ENCODE measurements at regions of chr14 and their contacts with region 1.

Region 1: DNA sequence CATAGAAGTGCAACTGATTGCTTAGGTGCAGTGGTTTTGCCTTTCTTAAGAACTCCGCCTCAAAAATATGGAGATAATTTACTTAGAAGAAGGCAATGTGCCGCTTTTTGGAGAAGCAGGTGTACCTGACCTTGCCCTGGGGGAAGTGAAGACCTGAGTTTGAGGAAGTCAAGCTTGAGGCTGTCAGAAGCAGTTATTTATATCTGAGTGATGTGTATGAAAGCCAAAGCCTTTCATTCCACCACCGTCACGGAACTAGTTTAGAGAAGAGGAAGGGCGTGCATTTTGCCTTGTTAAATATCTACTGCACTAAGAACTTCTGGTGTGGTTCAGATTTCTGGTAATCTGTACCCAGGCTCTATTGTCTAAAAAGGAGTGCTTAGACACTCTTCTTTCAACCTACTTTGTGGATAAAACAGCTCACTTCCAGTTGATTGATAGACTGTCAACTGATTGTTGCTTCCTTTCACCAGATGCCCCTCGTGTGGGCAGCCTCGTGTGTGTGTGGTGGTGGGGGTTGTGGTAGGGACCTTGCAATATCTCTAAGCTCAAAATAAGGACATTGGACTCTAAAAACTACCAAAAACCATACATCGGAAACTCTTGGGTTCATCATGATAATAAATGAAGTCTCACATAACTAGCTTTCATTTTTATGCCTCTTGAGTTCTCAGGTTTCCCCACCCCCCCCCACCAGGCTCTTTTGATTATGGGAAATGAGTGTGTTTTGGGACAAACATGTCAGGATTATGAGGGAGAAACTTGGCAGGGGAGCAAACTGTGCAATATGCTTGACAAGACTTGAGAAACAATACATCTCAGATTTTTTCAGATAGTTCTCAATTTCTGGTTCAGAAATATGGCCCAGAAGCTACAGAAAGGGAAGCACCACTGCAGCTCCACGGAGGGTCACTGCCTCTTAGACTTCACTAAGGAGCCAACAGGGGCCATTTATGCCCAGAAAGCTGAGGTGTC is 78.6 kb downstream of the ARF6 start:
- DNase-seq: peak; percentile 63
- H3K4me3 Mint-ChIP-seq: peak overlapping the region; percentile 72
- H3K27ac Mint-ChIP-seq: peak overlapping the region; percentile 98
- H3K4me1 Mint-ChIP-seq: peaks cover 57% of the 10 kb centered on the region
- H3K27me3 Mint-ChIP-seq: no peaks in the 10 kb centered on the region

Region 2: GRCh38 chr14:49620182-49621113 is 351.0 kb before region 1 on chr14 and contains the starts of genes MGAT2 and RPL36AL:
- CTCF ChIA-PET with region 1: no interaction called
- POLR2A ChIA-PET with region 1: interaction called, 16 read pairs
- DNase-seq: peak; percentile 96
- H3K4me3 Mint-ChIP-seq: peak within 1 kb of the TSS; percentile 94
- H3K27ac Mint-ChIP-seq: peak within 1 kb of the TSS; percentile 94
- H3K4me1 Mint-ChIP-seq: peaks cover 50% of the 10 kb centered on the region
- H3K27me3 Mint-ChIP-seq: no peaks in the 10 kb centered on the region
- total RNA-seq, gene MGAT2: 82.7 to 86.5 TPM
- total RNA-seq, gene RPL36AL: 320 to 330 TPM

Region 3: DNA sequence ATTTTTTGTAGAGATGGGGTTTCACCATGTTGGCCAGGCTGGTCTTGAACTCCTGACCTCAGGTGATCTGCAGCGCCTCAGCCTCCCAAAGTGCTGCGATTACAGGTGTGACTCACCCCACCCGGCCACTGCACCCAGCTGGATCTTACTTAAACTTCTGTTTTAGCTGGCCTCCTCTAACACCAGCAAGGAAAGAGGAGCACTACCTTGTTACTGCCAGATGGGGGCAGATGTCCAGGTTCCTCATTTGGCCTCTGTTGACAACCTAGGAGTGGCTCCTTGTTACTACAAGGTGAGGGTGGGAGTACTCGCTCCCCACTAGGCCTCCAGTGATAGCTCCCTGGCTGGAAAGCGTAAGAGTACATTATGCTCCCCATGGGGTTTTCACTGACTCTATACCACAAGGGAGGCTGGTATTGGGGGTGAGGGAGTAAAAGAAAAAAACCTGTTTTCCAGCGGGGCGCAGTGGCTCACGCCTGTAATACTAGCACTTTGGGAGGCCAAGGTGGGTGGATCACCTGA is 91.7 kb before region 1 on chr14:
- CTCF ChIA-PET with region 1: interaction called, 9 read pairs
- POLR2A ChIA-PET with region 1: interaction called, 19 read pairs
- DNase-seq: peak; percentile 76
- H3K4me3 Mint-ChIP-seq: no peak overlapping the region
- H3K27ac Mint-ChIP-seq: peak overlapping the region; percentile 50
- H3K4me1 Mint-ChIP-seq: peaks cover 48% of the 10 kb centered on the region
- H3K27me3 Mint-ChIP-seq: no peaks in the 10 kb centered on the region

Region 4: DNA sequence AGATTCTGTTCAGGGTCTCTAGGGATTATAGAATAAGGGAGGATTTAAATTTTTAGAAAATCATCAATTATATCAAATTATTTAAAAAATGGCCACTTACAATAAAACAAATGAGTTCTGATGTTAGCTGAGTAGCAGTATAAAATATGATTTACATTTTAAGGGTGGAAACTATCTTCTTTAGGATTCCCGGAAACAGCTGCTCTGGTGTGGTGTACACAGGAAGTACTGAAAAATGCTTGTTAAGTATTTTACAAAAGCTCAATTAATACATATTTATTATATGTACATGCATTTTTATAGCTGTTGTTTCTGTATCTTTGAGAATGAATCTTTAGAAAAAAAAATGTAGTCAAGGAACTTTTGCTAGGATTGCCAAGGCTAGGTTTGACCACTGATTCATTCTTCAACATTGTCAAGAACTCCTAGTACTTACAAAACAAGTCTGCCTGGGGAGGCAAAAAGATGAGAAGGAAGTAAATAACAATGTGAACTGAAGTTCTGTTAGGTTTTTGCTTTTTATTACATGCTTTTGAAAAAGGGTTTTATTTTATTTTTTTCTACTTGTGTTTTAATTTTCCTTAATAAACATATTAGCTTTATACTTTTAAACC is 30.5 kb before region 1 on chr14:
- CTCF ChIA-PET with region 1: interaction called, 37 read pairs
- POLR2A ChIA-PET with region 1: interaction called, 130 read pairs
- DNase-seq: peak; percentile 30
- H3K4me3 Mint-ChIP-seq: no peak overlapping the region
- H3K27ac Mint-ChIP-seq: peak overlapping the region; percentile 63
- H3K4me1 Mint-ChIP-seq: peaks cover 68% of the 10 kb centered on the region
- H3K27me3 Mint-ChIP-seq: no peaks in the 10 kb centered on the region

Region 5: GRCh38 chr14:50038398-50039119 is 67.1 kb after region 1 on chr14:
- CTCF ChIA-PET with region 1: interaction called, 4 read pairs
- POLR2A ChIA-PET with region 1: interaction called, 32 read pairs
- DNase-seq: peak; percentile 70
- H3K4me3 Mint-ChIP-seq: peak overlapping the region; percentile 79
- H3K27ac Mint-ChIP-seq: peak overlapping the region; percentile 98
- H3K4me1 Mint-ChIP-seq: peaks cover 83% of the 10 kb centered on the region
- H3K27me3 Mint-ChIP-seq: no peaks in the 10 kb centered on the region

Region 6: GRCh38 chr14:50116181-50116956 is 144.9 kb after region 1 on chr14 and contains the start of gene VCPKMT:
- CTCF ChIA-PET with region 1: no interaction called
- POLR2A ChIA-PET with region 1: interaction called, 20 read pairs
- DNase-seq: peak; percentile 97
- H3K4me3 Mint-ChIP-seq: peak within 1 kb of the TSS; percentile 99
- H3K27ac Mint-ChIP-seq: peak within 1 kb of the TSS; percentile 97
- H3K4me1 Mint-ChIP-seq: peaks cover 40% of the 10 kb centered on the region
- H3K27me3 Mint-ChIP-seq: no peaks in the 10 kb centered on the region
- total RNA-seq, gene VCPKMT: 7.5 to 9.5 TPM